ENCODE measurements at regions of chr2 and their contacts with region 1.

Region 1: GRCh38 chr2:100262555-100263320 is 59.6 kb downstream of the LONRF2 start:
- DNase-seq: peak; percentile 37 to 49 (median 46)
- H3K4me3 ChIP-seq: no peak overlapping the region
- H3K4me3 Mint-ChIP-seq: no peak overlapping the region
- H3K27ac ChIP-seq: no peak overlapping the region
- H3K27ac Mint-ChIP-seq: no peak overlapping the region
- H3K4me1 ChIP-seq: no peaks in the 10 kb centered on the region
- H3K4me1 Mint-ChIP-seq: no peaks in the 10 kb centered on the region
- H3K27me3 ChIP-seq: no peaks in the 10 kb centered on the region
- H3K27me3 Mint-ChIP-seq: peaks cover 0 to 1% of the 10 kb centered on the region in 2 donors

Region 2: DNA sequence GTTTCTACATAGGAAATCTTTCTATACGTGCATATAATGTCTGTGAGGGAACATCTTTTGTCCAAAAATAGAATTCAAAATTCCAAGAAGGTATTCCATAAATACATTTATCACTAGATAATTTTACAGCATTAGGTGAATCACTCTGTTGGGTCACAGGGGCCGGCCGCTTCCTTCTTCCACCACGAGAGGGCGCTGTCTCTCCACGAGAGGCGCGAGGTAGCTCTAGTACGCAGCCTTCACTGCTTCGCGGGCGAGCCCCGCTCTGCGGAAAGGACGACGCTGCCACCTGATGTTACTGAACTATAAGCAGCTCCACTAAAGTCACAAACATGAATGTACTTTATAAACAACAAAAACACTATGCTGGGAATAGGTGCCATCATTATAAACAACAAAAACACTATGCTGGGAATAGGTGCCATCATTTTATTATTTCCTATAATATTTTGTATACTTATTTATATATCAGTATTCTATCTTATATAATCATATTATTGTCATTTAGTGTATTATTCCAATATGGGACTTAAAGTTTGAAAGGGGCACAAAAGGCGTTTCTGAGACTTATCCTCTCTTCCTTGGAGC is 703.6 kb before region 1 on chr2:
- CTCF ChIA-PET with region 1: interaction called, 19 read pairs
- POLR2A ChIA-PET with region 1: no interaction called
- intact Hi-C with region 1: loop called (anchors 5 kb)
- DNase-seq: peak; percentile 58 to 69 (median 65)
- H3K4me3 ChIP-seq: no peak overlapping the region
- H3K4me3 Mint-ChIP-seq: peak overlapping the region in 3 of 8 donors; percentile 42 to 66 (median 59)
- H3K27ac ChIP-seq: no peak overlapping the region
- H3K27ac Mint-ChIP-seq: no peak overlapping the region
- H3K4me1 ChIP-seq: no peaks in the 10 kb centered on the region
- H3K4me1 Mint-ChIP-seq: peaks cover 0 to 2% (median 0%) of the 10 kb centered on the region in 4 donors
- H3K27me3 ChIP-seq: no peaks in the 10 kb centered on the region
- H3K27me3 Mint-ChIP-seq: peaks cover 3% of the 10 kb centered on the region in 2 donors

Region 3: GRCh38 chr2:100151310-100151709 is 111.4 kb before region 1 on chr2:
- CTCF ChIA-PET with region 1: no interaction called
- POLR2A ChIA-PET with region 1: no interaction called
- intact Hi-C with region 1: no loop called
- DNase-seq: no peak
- H3K4me3 ChIP-seq: no peak overlapping the region
- H3K4me3 Mint-ChIP-seq: no peak overlapping the region
- H3K27ac ChIP-seq: no peak overlapping the region
- H3K27ac Mint-ChIP-seq: no peak overlapping the region
- H3K4me1 ChIP-seq: no peaks in the 10 kb centered on the region
- H3K4me1 Mint-ChIP-seq: peaks cover 0 to 2% (median 0%) of the 10 kb centered on the region in 4 donors
- H3K27me3 ChIP-seq: no peaks in the 10 kb centered on the region
- H3K27me3 Mint-ChIP-seq: peaks cover 1 to 6% of the 10 kb centered on the region in 2 donors

Region 4: DNA sequence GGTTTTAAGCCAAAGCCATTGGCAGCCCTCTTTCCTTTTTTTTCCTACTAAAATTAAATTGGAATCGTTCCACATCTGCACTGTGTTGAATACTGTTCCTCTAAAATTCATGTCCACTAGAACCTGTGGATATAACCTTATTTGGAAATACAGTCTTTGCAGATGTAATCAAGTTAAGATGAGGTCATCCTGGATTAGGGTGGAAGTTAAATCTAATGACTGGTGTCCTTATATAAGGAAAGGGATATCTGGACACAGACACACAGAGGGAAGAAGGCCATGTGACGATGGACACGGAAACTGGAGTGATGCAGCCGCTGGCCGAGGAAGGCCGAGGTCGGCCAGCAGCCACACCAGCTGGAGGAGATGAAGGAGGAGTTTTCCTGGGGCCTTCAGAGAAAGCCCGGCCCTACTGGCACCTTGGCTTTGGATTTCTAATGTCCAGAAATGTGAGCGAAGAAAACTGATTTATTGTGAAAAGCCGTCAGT is 10.1 kb after region 1 on chr2:
- CTCF ChIA-PET with region 1: interaction called, 50 read pairs
- POLR2A ChIA-PET with region 1: no interaction called
- intact Hi-C with region 1: no loop called
- DNase-seq: no peak
- H3K4me3 ChIP-seq: no peak overlapping the region
- H3K4me3 Mint-ChIP-seq: no peak overlapping the region
- H3K27ac ChIP-seq: no peak overlapping the region
- H3K27ac Mint-ChIP-seq: no peak overlapping the region
- H3K4me1 ChIP-seq: no peaks in the 10 kb centered on the region
- H3K4me1 Mint-ChIP-seq: peaks cover 0 to 1% (median under 1%) of the 10 kb centered on the region in 4 donors
- H3K27me3 ChIP-seq: no peaks in the 10 kb centered on the region
- H3K27me3 Mint-ChIP-seq: peaks cover 0 to 2% of the 10 kb centered on the region in 2 donors

Region 5: GRCh38 chr2:100297511-100297910 is 34.8 kb after region 1 on chr2:
- CTCF ChIA-PET with region 1: interaction called, 14 read pairs
- POLR2A ChIA-PET with region 1: no interaction called
- intact Hi-C with region 1: no loop called
- DNase-seq: no peak
- H3K4me3 ChIP-seq: no peak overlapping the region
- H3K4me3 Mint-ChIP-seq: no peak overlapping the region
- H3K27ac ChIP-seq: no peak overlapping the region
- H3K27ac Mint-ChIP-seq: no peak overlapping the region
- H3K4me1 ChIP-seq: no peaks in the 10 kb centered on the region
- H3K4me1 Mint-ChIP-seq: no peaks in the 10 kb centered on the region
- H3K27me3 ChIP-seq: no peaks in the 10 kb centered on the region
- H3K27me3 Mint-ChIP-seq: peaks cover 4 to 9% of the 10 kb centered on the region in 2 donors

Region 6: GRCh38 chr2:100429726-100430125 is 167.0 kb after region 1 on chr2:
- CTCF ChIA-PET with region 1: no interaction called
- POLR2A ChIA-PET with region 1: no interaction called
- intact Hi-C with region 1: no loop called
- DNase-seq: no peak
- H3K4me3 ChIP-seq: no peak overlapping the region
- H3K4me3 Mint-ChIP-seq: no peak overlapping the region
- H3K27ac ChIP-seq: no peak overlapping the region
- H3K27ac Mint-ChIP-seq: no peak overlapping the region
- H3K4me1 ChIP-seq: no peaks in the 10 kb centered on the region
- H3K4me1 Mint-ChIP-seq: peaks cover 3 to 6% (median 5%) of the 10 kb centered on the region in 4 donors
- H3K27me3 ChIP-seq: peaks cover 5% of the 10 kb centered on the region
- H3K27me3 Mint-ChIP-seq: peaks cover 6 to 15% of the 10 kb centered on the region in 2 donors

Region 7: DNA sequence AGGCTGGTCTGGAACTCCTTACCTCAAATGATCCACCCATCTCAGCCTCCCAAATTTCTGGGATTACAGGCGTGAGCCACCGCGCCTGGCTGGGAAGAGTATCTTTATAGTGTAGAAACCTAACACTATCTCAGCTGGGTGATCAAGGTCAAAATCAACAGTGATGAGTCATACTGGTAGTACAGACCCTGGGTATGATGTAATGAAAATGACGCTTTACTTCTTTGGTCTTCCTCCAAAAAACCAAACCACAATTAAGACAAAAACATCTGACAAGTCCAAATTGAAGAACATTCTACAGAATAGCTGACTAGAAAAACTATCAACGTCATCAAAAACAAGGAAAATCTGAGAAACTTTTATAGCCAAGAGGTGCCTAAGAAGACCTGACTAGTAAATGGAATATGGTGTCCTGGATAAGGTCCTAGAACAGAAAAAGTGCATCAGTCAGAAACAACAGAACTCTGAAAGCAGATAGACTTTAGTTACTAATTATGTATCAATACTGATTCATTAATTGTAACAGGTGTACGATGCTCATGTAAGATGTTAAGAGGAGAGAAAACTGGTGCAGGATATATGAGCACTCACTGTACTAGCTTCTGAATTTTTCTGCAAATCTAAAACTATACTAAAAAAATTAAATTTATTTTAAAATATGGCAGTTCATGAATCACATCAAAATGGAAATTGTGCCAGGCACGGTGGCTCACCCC is 325.5 kb after region 1 on chr2:
- CTCF ChIA-PET with region 1: no interaction called
- POLR2A ChIA-PET with region 1: no interaction called
- intact Hi-C with region 1: loop called (anchors 10 kb)
- DNase-seq: peak; percentile 66 to 81 (median 73)
- H3K4me3 ChIP-seq: no peak overlapping the region
- H3K4me3 Mint-ChIP-seq: peak overlapping the region in 1 of 8 donors; percentile 6
- H3K27ac ChIP-seq: no peak overlapping the region
- H3K27ac Mint-ChIP-seq: peak overlapping the region; percentile 30 to 89 (median 70)
- H3K4me1 ChIP-seq: peaks cover 24% of the 10 kb centered on the region
- H3K4me1 Mint-ChIP-seq: peaks cover 16 to 47% (median 30%) of the 10 kb centered on the region in 4 donors
- H3K27me3 ChIP-seq: no peaks in the 10 kb centered on the region
- H3K27me3 Mint-ChIP-seq: no peaks in the 10 kb centered on the region